CD8-positive, alpha-beta T cell (primary cell): ENCODE measurements at regions of chr6 and their contacts with region 1.

Region 1: DNA sequence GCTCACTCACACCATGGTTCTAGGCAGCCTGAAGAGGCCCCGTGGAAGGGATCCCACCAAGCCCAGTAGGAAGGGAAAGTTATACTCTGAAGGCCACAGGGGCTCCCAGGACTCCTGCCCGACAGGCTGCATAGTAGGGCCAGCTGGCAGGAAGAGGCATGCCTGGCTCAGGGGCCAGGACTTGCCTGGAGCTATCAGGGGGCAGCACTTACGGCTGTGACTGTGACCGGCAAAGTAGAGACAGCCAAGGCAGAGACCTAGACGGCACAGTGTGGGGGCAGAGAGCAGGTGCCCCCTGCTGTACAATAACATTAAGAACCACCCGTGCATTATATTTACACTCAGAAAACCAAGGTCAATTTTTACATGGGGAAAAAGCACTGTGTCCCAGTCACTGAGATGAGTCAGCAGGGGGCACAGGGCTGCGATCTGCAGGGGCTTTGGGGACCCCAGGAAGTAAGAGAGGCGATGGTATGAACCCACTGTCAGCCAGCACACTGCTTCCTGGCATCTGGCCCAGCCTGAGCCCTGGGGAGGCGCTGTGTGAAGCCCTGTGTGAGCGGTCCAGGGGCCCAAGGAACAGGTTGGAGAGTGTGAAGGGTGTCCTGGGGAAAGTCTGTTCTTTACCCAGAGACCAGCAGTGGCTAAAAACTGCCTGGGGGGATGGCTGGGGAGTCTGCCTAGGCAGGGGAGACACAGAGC is 9.9 kb downstream of the CCDC167 start:
- DNase-seq: peak in 7 of 9 experiments; percentile 41 to 75 (median 58)
- ATAC-seq: peak; percentile 78
- H3K4me3 ChIP-seq: no peak overlapping the region
- H3K4me3 Mint-ChIP-seq: peak overlapping the region; percentile 32
- H3K27ac ChIP-seq: peak overlapping the region in 1 of 2 experiments; percentile 72
- H3K27ac Mint-ChIP-seq: peak overlapping the region; percentile 91
- H3K4me1 ChIP-seq: peaks cover 37% of the 10 kb centered on the region
- H3K4me1 Mint-ChIP-seq: peaks cover 44% of the 10 kb centered on the region
- H3K27me3 ChIP-seq: no peaks in the 10 kb centered on the region
- H3K27me3 Mint-ChIP-seq: no peaks in the 10 kb centered on the region
- CTCF ChIP-seq: peak; percentile 55

Region 2: DNA sequence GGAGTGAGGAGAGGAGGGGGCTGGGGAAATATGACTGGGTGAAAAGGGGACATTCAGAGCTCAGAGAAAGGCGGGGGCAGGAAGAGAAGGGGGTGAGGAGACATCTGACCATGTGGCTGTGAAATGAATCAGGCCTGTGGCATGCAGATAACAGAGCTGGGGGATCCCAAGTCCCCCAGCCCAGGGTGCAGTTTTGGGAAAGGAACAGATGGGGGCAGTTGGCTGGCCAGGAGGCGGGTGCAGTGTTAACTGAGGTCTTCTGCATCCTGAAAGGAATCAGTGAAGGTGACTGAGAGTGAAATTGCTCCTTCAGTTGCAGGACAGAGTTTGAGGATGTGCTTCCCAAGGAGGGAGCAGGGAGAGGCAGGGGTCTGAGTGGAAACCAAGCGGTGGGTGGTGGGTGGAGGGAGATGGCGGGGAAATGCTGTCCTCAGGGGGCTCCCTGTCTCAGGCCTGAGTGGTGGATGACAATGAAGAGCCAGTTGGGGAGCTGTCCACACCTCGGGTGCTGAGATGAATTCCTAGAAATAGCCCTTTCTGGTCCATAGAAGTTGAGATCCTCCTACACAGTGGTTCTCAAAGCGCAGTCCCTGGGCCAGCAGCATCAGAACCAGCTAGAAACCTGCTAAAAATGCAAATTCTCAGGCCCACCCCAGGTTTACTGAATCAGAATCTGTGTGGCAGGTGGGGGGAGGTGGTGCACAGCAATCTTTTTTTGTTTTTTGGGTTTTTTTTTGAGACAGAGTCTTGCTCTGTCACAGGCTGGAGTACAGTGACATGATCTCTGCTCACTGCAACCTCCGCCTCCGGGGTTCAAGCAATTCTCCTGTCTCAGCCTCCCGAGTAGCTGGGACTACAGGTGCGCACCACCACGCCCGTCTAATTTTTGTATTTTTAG is 35.9 kb after region 1 on chr6:
- CTCF ChIA-PET with region 1: interaction called, 5 read pairs
- POLR2A ChIA-PET with region 1: no interaction called
- intact Hi-C with region 1: loop called in 1 of 2 experiments (anchors 5 kb)
- DNase-seq: no peak
- ATAC-seq: peak; percentile 40
- H3K4me3 ChIP-seq: no peak overlapping the region
- H3K4me3 Mint-ChIP-seq: no peak overlapping the region
- H3K27ac ChIP-seq: no peak overlapping the region
- H3K27ac Mint-ChIP-seq: peak overlapping the region; percentile 57
- H3K4me1 ChIP-seq: peaks cover 12% of the 10 kb centered on the region
- H3K4me1 Mint-ChIP-seq: peaks cover 67% of the 10 kb centered on the region
- H3K27me3 ChIP-seq: no peaks in the 10 kb centered on the region
- H3K27me3 Mint-ChIP-seq: no peaks in the 10 kb centered on the region
- CTCF ChIP-seq: no peak